ACHN (cell line): ENCODE measurements at regions of chr1 and their contacts with region 1.

Region 1: DNA sequence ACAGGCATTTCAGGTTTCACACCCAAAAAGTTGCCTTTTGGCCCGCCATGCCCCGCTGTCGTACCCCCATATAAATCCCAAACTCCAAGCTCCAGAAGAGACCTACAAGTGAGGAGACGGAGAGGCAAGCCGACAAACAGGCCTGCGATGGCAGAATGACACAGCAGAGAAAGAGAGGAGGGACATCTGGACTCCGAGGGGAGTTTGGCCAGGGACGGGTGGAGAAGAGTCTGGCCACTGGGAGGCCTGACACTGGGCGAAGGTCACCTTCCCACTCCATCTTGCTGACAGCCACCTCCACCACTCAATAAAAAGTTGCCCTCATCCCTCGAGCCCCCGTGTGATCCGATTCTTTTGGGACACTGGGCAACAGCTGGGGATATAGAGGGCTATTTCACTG is 1.9 kb upstream of the CFH start:
- DNase-seq: no peak

Region 2: DNA sequence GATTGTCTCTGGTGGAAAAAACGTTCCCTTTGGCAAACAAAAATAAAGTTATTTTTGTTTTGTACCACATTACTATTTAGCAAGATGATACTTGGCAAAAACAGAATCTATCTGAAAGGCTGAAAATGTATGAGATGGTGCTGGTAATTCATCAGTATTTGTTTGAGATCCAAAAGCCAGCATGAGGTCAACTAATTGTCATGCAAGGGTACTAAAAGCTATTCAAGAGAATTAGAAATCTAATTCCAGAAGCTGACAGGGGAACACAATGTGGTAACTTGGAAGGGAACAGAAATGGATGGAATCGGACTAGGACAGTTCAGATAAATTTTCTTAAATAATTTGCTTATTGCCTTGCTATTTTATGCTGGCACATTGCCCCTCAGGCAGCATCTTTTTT is 305.5 kb before region 1 on chr1:
- in situ Hi-C with region 1: loop called (anchors 25 kb)
- DNase-seq: no peak

Region 3: DNA sequence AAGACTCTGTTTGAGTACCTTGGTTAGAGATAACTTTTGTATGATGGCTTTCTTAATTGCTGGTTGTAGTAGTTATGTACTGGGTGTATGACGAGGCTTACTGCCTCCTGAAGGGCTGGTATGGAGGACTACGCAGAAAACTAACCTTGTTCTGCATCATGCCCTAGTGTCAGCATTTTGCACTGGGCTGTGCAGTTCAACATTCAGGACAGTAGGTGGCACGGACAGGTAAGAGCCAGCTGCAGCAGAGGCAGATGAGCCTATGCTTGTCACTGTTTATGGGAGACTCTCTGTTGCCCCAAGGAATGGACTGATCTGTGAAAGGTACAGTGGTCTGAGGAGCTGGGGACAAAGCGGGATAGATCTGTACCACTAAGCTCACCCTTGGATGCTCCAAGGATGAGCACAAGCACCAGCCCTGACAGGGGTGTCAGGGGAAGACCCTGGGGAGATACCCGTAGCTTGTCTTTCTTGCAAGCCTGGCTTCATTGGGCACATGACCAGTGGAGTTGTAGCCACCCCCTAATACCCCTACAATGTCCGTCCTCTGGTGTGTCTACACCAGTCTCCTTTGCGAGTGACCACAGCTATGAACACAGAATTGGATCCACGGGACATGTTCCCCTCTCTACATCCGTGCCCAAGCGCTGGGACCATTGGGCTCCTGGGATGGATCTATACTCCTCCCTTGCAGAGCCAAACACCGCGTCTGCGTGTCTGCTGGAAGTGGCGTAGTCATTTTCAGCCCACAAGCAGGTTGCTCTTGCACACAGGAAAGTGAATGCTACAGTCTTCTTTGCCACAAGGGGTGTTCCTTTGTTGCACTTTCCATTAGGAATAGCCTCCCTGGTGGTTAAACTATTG is 73.6 kb after region 1 on chr1:
- in situ Hi-C with region 1: no loop called
- DNase-seq: peak; percentile 81